Breast epithelium (tissue), 4 donors: ENCODE measurements at regions of chr1 and their contacts with region 1.

Region 1: GRCh38 chr1:109075531-109076490 is at the start of gene TAF13:
- DNase-seq: peak; percentile 91 to 93
- H3K4me3 ChIP-seq: peak within 1 kb of the TSS; percentile 68 to 83 (median 71)
- H3K27ac ChIP-seq: peak within 1 kb of the TSS; percentile 93 to 94
- H3K4me1 ChIP-seq: no peaks in the 10 kb centered on the region
- H3K27me3 ChIP-seq: no peaks in the 10 kb centered on the region
- CTCF ChIP-seq: peak; percentile 49 to 70 (median 61)
- POLR2A ChIP-seq: peak; percentile 91
- total RNA-seq, gene TAF13: 23.1 to 36.4 (median 25.8) TPM

Region 2: DNA sequence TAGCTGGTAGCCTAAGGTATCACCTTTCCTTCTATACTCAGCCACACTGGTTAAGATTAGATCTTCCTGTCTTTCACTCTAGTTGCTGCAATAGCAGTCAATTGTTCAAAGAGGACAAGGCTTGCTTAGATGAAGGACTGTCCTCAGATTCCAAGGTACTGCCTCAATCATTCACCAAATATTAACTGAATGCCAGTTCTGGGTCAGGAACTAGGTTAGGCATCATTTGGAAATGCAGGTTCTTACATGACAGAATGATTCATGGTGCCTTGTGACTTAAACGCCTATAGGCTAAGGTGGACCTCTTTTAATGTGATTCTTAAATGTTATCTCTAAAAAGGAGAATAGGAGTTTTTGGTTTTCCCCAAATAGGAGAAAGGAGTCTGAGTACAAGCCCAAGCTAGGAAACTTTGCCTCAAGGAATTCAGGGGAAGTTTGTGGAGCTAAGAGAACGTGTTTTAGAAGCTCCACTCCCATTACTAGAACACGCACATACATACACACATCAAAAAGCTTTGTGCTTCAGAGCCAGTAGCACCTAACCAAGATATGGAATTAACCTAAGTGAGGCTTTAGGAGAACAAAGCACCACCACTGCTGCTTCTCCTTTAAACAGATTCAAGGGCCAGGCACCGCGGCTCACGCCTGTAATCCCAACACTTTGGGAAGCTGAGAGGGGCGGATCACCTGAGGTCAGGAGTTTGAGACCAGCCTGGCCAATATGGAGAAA is 25.4 kb before region 1 on chr1:
- intact Hi-C with region 1: no loop called
- DNase-seq: no peak
- H3K4me3 ChIP-seq: no peak overlapping the region
- H3K27ac ChIP-seq: no peak overlapping the region
- H3K4me1 ChIP-seq: no peaks in the 10 kb centered on the region
- H3K27me3 ChIP-seq: no peaks in the 10 kb centered on the region
- CTCF ChIP-seq: no peak
- POLR2A ChIP-seq: no peak

Region 3: GRCh38 chr1:109104364-109105151 is 28.7 kb after region 1 on chr1:
- intact Hi-C with region 1: loop called (anchors 1 kb)
- DNase-seq: no peak
- H3K4me3 ChIP-seq: no peak overlapping the region
- H3K27ac ChIP-seq: no peak overlapping the region
- H3K4me1 ChIP-seq: no peaks in the 10 kb centered on the region
- H3K27me3 ChIP-seq: no peaks in the 10 kb centered on the region
- CTCF ChIP-seq: no peak
- POLR2A ChIP-seq: no peak